ENCODE measurements at regions of chr5 and their contacts with region 1.

Region 1: DNA sequence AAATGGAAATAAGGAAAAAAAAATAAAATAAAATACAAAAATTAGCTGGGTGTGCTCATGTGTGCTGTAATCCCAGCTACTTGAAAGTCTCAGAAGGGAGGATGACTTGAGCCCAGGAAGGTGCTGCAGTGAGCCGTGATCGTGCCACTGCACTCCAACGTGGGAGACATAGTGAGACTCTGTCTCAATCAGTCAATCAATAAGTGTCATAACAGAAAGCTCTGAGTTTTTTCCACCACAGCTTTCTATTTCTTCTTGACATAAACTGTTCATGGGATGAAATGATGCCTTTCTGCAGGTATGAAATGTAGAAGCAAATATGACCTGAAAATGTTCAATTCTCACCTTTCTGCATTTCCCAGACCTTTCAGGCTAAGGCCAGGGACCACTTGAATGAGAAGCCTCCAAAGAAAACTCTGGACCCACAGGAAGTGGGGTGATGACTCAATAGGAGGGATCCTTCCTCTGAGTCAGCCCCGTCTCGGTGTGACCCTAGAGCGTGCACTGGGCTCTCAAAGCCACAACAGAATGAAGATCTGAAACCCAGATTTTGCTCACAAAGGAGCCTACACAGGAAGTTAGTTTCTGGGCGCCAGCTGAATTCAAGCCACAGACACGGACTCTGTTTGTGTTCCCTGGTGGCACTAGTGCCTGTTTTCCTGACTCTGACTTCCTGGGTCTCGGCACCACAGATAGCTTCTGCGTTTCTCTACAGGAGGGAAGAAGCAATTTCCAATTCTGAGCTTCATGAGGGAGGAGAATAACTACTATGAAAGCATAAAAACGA is 62.0 kb downstream of the ANKH start:
- DNase-seq: peak; percentile 90
- H3K4me3 Mint-ChIP-seq: peak overlapping the region; percentile 74
- H3K27ac Mint-ChIP-seq: peak overlapping the region; percentile 80
- H3K4me1 Mint-ChIP-seq: peaks cover 57% of the 10 kb centered on the region
- H3K27me3 Mint-ChIP-seq: no peaks in the 10 kb centered on the region

Region 2: GRCh38 chr5:14595189-14595588 is 214.4 kb before region 1 on chr5:
- CTCF ChIA-PET with region 1: no interaction called
- POLR2A ChIA-PET with region 1: no interaction called
- intact Hi-C with region 1: loop called (anchors 10 kb)
- DNase-seq: peak; percentile 50
- H3K4me3 Mint-ChIP-seq: peak overlapping the region; percentile 63
- H3K27ac Mint-ChIP-seq: peak overlapping the region; percentile 70
- H3K4me1 Mint-ChIP-seq: peaks cover 84% of the 10 kb centered on the region
- H3K27me3 Mint-ChIP-seq: no peaks in the 10 kb centered on the region

Region 3: DNA sequence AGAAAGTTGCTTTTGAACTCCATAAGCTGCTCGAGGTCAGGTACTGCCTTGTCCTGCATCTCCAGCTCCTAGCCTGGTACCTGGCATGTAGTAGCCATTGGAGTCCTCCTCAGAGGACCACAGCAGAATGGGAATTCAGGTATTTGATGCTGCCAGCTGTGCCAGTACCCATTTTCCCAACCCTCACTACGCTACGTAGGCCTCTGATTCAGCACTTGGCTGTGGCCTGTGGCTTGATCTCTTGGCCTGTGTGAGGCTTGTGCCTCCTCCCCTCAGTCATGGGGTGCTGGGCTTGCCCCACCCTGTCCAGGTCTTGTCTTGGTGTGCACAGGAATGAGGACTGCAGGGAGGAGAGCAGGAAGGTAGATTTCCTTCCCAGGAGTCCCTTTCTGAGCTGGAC is 133.2 kb before region 1 on chr5:
- CTCF ChIA-PET with region 1: no interaction called
- POLR2A ChIA-PET with region 1: no interaction called
- intact Hi-C with region 1: loop called (anchors 1 kb)
- DNase-seq: peak; percentile 59
- H3K4me3 Mint-ChIP-seq: peak overlapping the region; percentile 30
- H3K27ac Mint-ChIP-seq: peak overlapping the region; percentile 89
- H3K4me1 Mint-ChIP-seq: peaks cover 75% of the 10 kb centered on the region
- H3K27me3 Mint-ChIP-seq: no peaks in the 10 kb centered on the region

Region 4: GRCh38 chr5:14706615-14707021 is 102.9 kb before region 1 on chr5:
- CTCF ChIA-PET with region 1: no interaction called
- POLR2A ChIA-PET with region 1: interaction called, 3 read pairs
- intact Hi-C with region 1: loop called (anchors 1 kb)
- DNase-seq: peak; percentile 56
- H3K4me3 Mint-ChIP-seq: peak overlapping the region; percentile 57
- H3K27ac Mint-ChIP-seq: peak overlapping the region; percentile 94
- H3K4me1 Mint-ChIP-seq: peaks cover 74% of the 10 kb centered on the region
- H3K27me3 Mint-ChIP-seq: no peaks in the 10 kb centered on the region

Region 5: DNA sequence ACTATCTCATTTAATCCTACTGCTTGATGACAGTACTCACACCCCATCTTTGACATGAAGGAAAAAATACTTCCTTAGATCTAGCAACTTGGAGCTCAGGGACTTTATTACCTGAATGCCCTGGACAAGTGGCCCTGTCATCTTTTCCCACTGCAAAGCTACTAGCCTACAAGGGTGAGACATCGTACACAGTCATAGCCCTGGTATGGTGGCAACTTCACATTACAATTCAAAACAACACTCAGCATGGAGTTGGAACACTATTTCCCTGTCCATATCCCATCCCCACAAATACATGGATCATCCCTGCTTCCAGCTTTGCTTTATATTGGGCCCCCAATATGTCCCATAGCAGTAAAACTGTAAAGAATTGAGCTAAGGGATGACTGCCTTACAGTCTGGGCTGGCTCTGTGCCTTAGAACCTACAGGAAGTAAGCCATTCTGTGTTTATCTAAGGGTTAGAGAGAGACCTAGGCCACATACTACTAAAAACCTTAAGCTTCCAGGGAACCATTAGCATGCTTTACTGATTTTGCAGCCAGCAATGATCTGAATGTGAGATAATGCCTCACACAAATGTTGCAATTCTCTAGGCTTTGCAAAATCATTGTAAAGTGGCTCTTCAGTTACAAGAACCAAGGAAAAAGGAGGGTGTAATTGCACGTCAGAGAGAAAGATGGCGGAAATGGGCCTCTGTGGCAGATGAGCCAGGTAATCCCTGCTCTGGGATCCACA is 89.2 kb before region 1 on chr5:
- CTCF ChIA-PET with region 1: no interaction called
- POLR2A ChIA-PET with region 1: no interaction called
- intact Hi-C with region 1: loop called (anchors 1 kb)
- DNase-seq: no peak
- H3K4me3 Mint-ChIP-seq: no peak overlapping the region
- H3K27ac Mint-ChIP-seq: peak overlapping the region; percentile 19
- H3K4me1 Mint-ChIP-seq: peaks cover 46% of the 10 kb centered on the region
- H3K27me3 Mint-ChIP-seq: no peaks in the 10 kb centered on the region

Region 6: GRCh38 chr5:14783691-14784206 is 25.8 kb before region 1 on chr5:
- CTCF ChIA-PET with region 1: no interaction called
- POLR2A ChIA-PET with region 1: no interaction called
- intact Hi-C with region 1: loop called (anchors 2 kb)
- DNase-seq: no peak
- H3K4me3 Mint-ChIP-seq: no peak overlapping the region
- H3K27ac Mint-ChIP-seq: no peak overlapping the region
- H3K4me1 Mint-ChIP-seq: peaks cover 38% of the 10 kb centered on the region
- H3K27me3 Mint-ChIP-seq: no peaks in the 10 kb centered on the region

Region 7: GRCh38 chr5:14996997-14997396 is 187.4 kb after region 1 on chr5:
- CTCF ChIA-PET with region 1: interaction called, 9 read pairs
- POLR2A ChIA-PET with region 1: no interaction called
- intact Hi-C with region 1: loop called (anchors 2 kb)
- DNase-seq: no peak
- H3K4me3 Mint-ChIP-seq: no peak overlapping the region
- H3K27ac Mint-ChIP-seq: no peak overlapping the region
- H3K4me1 Mint-ChIP-seq: peaks cover 21% of the 10 kb centered on the region
- H3K27me3 Mint-ChIP-seq: no peaks in the 10 kb centered on the region